Heart left ventricle (tissue), 16 donors: ENCODE measurements at regions of chr2 and their contacts with region 1.

Region 1: GRCh38 chr2:133166031-133166430 is 402.2 kb downstream of the NCKAP5 start:
- DNase-seq: no peak
- ATAC-seq: no peak
- H3K4me3 ChIP-seq: no peak overlapping the region
- H3K27ac ChIP-seq: no peak overlapping the region
- H3K4me1 ChIP-seq: no peaks in the 10 kb centered on the region
- H3K27me3 ChIP-seq: no peaks in the 10 kb centered on the region
- CTCF ChIP-seq: no peak
- POLR2A ChIP-seq: no peak

Region 2: DNA sequence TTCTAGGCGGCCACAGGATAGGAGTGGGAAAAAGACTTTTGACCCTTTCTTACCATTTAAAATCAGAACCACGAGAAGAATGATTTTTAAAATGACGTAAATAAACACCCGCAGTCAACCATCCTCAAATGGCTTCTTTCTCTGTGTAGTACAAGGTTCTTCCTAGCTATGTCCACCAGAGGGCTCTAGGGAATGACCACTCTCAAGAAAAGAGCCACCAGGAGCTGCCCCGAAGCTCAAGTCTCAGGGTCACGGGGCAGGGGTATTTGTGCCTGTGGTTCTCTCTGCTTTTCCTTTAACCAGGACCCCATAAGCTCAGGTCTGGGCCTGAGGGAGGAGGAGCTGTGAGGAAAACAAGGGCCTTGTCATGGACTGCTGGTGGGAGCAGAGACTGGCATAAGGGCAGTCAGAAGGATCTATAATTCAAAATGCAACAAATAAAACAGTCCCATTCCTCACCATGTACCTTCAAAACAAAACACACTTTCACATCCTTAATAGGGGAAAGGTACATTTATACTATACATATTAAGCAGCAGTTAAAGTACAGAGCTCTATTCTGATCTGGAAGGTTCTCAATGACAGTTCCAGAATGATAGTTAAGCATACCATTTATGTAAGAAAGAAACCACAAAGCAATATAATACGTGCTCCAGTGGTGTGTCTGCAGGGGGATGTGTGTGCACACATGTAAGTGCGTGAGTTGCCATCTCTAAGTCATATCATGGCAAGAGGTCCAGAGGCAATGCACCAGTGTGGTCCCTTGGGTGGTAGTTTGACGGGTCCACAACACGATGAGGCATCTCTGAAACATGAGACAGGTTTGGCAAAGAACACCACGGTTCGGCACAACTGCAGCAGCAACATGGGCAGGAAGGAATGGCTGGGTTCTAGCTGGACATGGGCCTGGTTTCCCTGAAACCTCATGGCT is 514.7 kb before region 1 on chr2:
- intact Hi-C with region 1: loop called in 3 of 10 experiments (anchors 10 kb)
- DNase-seq: no peak
- ATAC-seq: peak in 1 of 4 donors; percentile 57
- H3K4me3 ChIP-seq: no peak overlapping the region
- H3K27ac ChIP-seq: no peak overlapping the region
- H3K4me1 ChIP-seq: no peaks in the 10 kb centered on the region
- H3K27me3 ChIP-seq: peaks cover 0 to 9% (median 0%) of the 10 kb centered on the region in 9 donors
- CTCF ChIP-seq: peak in 9 of 12 donors; percentile 24 to 73 (median 49)
- POLR2A ChIP-seq: no peak

Region 3: GRCh38 chr2:132670496-132671150 is 495.4 kb before region 1 on chr2:
- intact Hi-C with region 1: loop called in 1 of 10 experiments (anchors 10 kb)
- DNase-seq: peak in 4 of 5 donors; percentile 10 to 36 (median 26)
- ATAC-seq: peak in 3 of 4 donors; percentile 69 to 75 (median 70)
- H3K4me3 ChIP-seq: peak overlapping the region; percentile 28 to 63 (median 52)
- H3K27ac ChIP-seq: no peak overlapping the region
- H3K4me1 ChIP-seq: peaks cover 0 to 33% (median 17%) of the 10 kb centered on the region in 12 donors
- H3K27me3 ChIP-seq: peaks cover 15 to 58% (median 43%) of the 10 kb centered on the region in 9 donors
- CTCF ChIP-seq: peak in 1 of 12 donors; percentile 7
- POLR2A ChIP-seq: no peak